Tibial artery (tissue), 4 donors: ENCODE measurements at regions of chr2 and their contacts with region 1.

Region 1: GRCh38 chr2:219218732-219219701 is at the start of gene ABCB6:
- DNase-seq: peak; percentile 99
- H3K4me3 ChIP-seq: peak within 1 kb of the TSS; percentile 55 to 60
- H3K27ac ChIP-seq: peak within 1 kb of the TSS; percentile 88 to 89
- H3K4me1 ChIP-seq: peaks cover 5 to 41% (median 31%) of the 10 kb centered on the region in 4 donors
- H3K27me3 ChIP-seq: no peaks in the 10 kb centered on the region
- CTCF ChIP-seq: no peak

Region 2: GRCh38 chr2:219206442-219207253 is 12.4 kb before region 1 on chr2 and contains the start of gene ZFAND2B:
- intact Hi-C with region 1: loop called (anchors 1 kb)
- DNase-seq: peak; percentile 95 to 97
- H3K4me3 ChIP-seq: peak within 1 kb of the TSS; percentile 74 to 88
- H3K27ac ChIP-seq: peak within 1 kb of the TSS; percentile 91 to 93
- H3K4me1 ChIP-seq: peaks cover 0 to 20% (median 15%) of the 10 kb centered on the region in 4 donors
- H3K27me3 ChIP-seq: no peaks in the 10 kb centered on the region
- CTCF ChIP-seq: peak; percentile 15 to 50